A673 (cell line): ENCODE measurements at regions of chr2 and their contacts with region 1.

Region 1: GRCh38 chr2:175181104-175181876 is at the start of gene ATP5MC3:
- DNase-seq: peak; percentile 97
- H3K4me3 ChIP-seq: peak within 1 kb of the TSS; percentile 94
- H3K27ac ChIP-seq: peak within 1 kb of the TSS; percentile 89
- H3K4me1 ChIP-seq: peaks cover 15% of the 10 kb centered on the region
- H3K27me3 ChIP-seq: no peaks in the 10 kb centered on the region
- CTCF ChIP-seq: peak; percentile 26; the same call in 1 of the 2 replicates
- total RNA-seq, gene ATP5MC3: 385 and 389 TPM in 2 replicates

Region 2: DNA sequence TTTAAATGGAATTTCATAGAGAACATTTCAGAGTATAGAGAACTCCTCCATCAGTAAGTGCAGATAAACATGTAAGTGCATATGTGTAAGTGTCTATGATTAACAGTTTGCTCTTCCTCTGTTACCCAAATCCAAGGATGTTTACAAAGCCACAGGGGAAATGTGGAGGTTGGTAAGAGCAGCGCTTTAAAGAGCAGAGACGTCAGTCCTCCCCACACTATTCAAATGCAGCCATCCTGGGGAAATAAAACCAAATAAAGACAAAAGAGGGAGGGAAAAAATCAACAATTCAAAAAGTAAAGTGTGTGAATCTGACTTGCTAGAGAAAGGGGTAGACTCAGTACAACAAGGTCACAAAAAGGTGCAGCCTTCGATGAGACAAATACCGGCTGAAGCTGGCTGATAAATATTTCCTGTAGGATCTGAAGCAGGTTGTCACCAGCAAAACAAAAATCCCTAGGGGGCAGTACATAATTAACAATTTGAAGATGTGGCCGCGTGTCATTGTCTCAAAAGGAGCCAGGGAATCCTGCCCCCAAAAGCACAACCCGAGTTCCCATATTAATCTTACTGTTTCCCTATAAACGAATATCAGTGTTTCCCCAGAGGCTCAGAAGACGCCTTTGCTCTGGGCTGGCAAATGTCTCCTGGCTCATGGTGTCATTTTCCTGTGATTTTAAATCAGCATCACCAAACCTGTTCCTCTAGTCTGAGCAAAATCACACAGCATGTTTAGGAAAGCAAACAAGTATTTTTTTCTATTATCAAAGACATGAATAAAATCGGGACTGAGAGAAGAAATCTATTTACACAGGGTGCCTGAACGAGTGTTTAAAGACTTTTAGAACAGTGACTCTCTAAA is 1610.0 kb before region 1 on chr2:
- CTCF ChIA-PET with region 1: no interaction called
- POLR2A ChIA-PET with region 1: no interaction called
- intact Hi-C with region 1: no loop called
- DNase-seq: peak; percentile 61
- H3K4me3 ChIP-seq: no peak overlapping the region
- H3K27ac ChIP-seq: no peak overlapping the region
- H3K4me1 ChIP-seq: no peaks in the 10 kb centered on the region
- H3K27me3 ChIP-seq: peaks cover 3% of the 10 kb centered on the region
- CTCF ChIP-seq: peak; percentile 40; the same call in 1 of the 2 replicates

Region 3: GRCh38 chr2:175030380-175031271 is 150.7 kb before region 1 on chr2:
- CTCF ChIA-PET with region 1: no interaction called
- POLR2A ChIA-PET with region 1: no interaction called
- intact Hi-C with region 1: loop called (anchors 10 kb)
- DNase-seq: peak; percentile 57
- H3K4me3 ChIP-seq: no peak overlapping the region
- H3K27ac ChIP-seq: no peak overlapping the region
- H3K4me1 ChIP-seq: no peaks in the 10 kb centered on the region
- H3K27me3 ChIP-seq: no peaks in the 10 kb centered on the region
- CTCF ChIP-seq: peak; percentile 57

Region 4: GRCh38 chr2:175877845-175878544 is 696.7 kb after region 1 on chr2:
- CTCF ChIA-PET with region 1: no interaction called
- POLR2A ChIA-PET with region 1: no interaction called
- intact Hi-C with region 1: no loop called
- DNase-seq: peak; percentile 6
- H3K4me3 ChIP-seq: no peak overlapping the region
- H3K27ac ChIP-seq: no peak overlapping the region
- H3K4me1 ChIP-seq: no peaks in the 10 kb centered on the region
- H3K27me3 ChIP-seq: peaks cover 3% of the 10 kb centered on the region
- CTCF ChIP-seq: no peak